A549 (cell line): ENCODE measurements at regions of chr2 and their contacts with region 1.

Region 1: DNA sequence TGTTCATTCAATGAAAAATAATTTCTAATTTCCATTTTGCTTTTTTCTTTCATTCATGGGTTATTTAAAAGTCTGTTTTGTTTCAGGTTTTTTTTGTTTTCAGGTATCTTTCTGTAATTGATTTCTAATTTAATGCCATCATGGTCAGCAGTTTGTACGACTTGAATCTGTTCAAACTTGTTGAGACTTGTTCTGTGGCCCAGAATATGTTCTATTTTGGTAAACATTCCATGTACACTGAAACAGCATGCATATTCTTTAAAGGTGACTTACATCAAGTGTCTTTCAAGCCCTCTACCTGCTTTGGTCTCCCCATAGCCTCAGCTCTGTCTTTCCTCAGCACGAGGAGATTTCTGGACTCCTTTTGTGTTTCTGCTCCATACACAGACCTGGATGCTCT is 49.1 kb downstream of the CYP1B1 start:
- DNase-seq: no peak
- ATAC-seq: no peak
- H3K4me3 ChIP-seq: no peak overlapping the region
- H3K27ac ChIP-seq: no peak overlapping the region
- H3K4me1 ChIP-seq: no peaks in the 10 kb centered on the region
- CTCF ChIP-seq: no peak
- EP300 ChIP-seq: no peak
- POLR2A ChIP-seq: no peak
- RAD21 ChIP-seq: no peak

Region 2: GRCh38 chr2:37982147-37982582 is 44.7 kb before region 1 on chr2:
- CTCF ChIA-PET with region 1: no interaction called
- POLR2A ChIA-PET with region 1: no interaction called
- DNase-seq: peak in 1 of 2 experiments; percentile 64
- ATAC-seq: peak; percentile 82 to 85
- H3K4me3 ChIP-seq: peak overlapping the region; percentile 29; the same call in 1 of the 3 replicates
- H3K27ac ChIP-seq: 0 out of 6 replicates have a peak overlapping the region, but pooled peaks have one; percentile 21 to 22
- H3K4me1 ChIP-seq: peaks cover 4% of the 10 kb centered on the region; the same call in 1 of the 3 replicates
- CTCF ChIP-seq: peak; percentile 99
- EP300 ChIP-seq: no peak
- POLR2A ChIP-seq: no peak
- RAD21 ChIP-seq: peak; percentile 81 to 89

Region 3: DNA sequence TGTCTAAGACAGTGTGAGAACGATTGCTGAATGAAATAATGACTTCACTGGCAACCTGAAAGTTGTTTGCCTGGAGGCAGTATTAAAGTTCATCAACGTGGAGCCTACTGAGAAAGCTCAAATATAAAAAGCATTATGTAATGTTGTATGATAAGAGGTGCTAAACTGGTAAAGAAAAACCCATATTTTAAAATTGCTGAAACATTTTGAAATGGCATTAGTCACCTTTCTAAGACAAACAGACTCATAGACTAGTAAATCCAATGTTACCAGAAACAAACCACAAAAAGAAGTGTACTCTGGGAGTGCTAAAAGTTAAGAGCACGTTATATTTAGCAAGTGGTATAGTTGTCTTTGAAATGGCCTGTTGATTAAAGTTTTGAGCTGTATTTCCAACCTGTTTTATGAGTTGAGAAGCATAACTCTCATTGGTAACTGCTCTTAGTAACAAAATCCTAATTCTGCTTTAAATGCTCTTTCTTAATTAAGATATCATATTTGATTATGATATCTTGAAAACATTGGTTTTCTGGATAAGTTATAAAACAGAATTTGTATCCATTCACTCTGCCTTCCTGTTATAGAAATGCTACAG is 13.6 kb before region 1 on chr2:
- CTCF ChIA-PET with region 1: interaction called, 12 read pairs
- POLR2A ChIA-PET with region 1: no interaction called
- DNase-seq: no peak
- ATAC-seq: no peak
- H3K4me3 ChIP-seq: no peak overlapping the region
- H3K27ac ChIP-seq: no peak overlapping the region; a peak in 1 of 6 replicates
- H3K4me1 ChIP-seq: peaks cover 19% of the 10 kb centered on the region
- CTCF ChIP-seq: no peak
- EP300 ChIP-seq: no peak
- POLR2A ChIP-seq: no peak
- RAD21 ChIP-seq: no peak